GM13976 (cell line): ENCODE measurements at regions of chr9 and their contacts with region 1.

Region 1: DNA sequence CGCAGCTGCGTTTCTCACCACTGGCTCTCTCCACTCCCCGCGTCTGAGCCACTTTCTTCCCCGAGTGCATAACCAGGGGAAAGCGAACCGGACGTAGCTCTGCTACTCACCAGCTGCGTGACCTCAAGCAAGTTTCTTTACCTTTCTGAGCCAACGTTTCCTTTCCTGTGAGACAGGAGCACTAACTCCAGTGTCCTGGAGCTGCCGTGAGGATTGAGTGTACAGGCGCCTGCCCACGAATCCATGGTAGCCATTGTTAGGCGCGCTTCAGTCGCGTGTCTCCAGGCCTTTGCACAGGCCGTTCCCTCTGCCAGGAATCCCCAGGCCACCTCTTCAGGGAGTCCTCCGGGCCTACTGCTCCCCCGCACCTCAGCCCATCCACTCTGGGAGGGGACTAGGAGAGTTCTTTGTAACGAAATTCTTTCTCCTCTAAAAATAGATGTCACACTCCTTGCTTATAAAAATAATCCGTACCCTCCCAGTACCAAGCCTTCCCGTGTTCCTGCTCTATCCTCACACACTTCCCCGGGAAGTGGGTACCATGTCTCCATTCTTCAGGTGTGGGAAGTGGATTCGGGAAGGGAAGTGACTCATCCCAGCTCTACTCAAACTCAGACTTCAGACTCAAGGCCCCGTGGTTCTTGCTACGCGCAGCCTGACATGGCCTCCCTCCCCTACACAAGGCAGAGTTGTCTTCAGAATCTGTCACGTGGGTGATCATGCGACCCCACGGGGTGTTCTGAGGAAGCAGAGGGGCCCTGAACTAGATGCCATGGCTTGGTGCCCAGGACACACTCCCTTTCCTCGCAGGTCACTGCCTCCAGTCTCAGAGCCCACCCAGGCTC is 16.1 kb upstream of the CRB2 start:
- DNase-seq: no peak
- CTCF ChIP-seq: no peak

Region 2: DNA sequence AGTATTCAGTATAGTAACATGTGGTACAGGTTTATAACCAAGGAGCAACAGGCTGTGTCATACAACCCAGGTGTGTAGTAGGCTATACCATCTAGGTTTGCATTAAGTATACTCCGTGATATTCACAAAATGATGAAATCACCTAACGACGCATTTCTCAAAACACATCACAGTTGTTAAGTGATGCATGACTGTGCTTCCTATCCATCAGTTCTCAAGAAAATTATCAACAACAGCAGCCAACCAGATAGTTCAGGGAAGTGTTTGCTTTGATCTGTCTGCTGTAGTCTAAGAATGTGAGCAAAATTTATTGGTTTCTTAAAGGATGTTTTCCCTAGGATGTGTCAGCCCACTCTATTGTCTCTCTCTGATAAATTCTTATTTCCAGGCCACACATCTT is 415.9 kb before region 1 on chr9:
- in situ Hi-C with region 1: no loop called
- DNase-seq: no peak
- CTCF ChIP-seq: no peak

Region 3: DNA sequence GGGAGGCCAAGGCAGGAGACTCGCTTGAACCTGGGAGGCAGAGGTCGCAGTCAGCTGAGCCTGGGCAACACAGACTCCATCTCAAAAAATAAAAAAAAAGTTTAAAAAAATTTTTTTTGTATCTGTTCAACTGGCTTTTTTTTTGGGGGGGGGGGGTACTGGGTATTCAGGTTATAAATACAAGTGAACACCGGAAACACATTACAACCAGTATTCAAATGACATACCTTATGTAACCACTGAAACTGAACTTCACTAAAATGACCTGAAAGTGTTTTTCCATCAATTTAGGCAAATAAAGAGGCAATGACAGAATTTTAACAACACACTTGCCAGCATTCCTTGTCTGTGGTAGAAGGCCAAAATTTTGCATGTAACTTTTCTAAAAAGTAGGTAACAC is 105.0 kb before region 1 on chr9:
- in situ Hi-C with region 1: loop called (anchors 5 kb)
- DNase-seq: peak; percentile 51
- CTCF ChIP-seq: no peak